GM12878 (cell line): ENCODE measurements at regions of chr19 and their contacts with region 1.

Region 1: GRCh38 chr19:29966588-29967249 is 24.7 kb downstream of the URI1 start:
- DNase-seq: no peak
- ATAC-seq: peak; percentile 81
- H3K4me3 ChIP-seq: no peak overlapping the region
- H3K27ac ChIP-seq: peak overlapping the region; percentile 50; the same call in 1 of the 2 replicates
- H3K4me1 ChIP-seq: peaks cover 11% of the 10 kb centered on the region
- H3K27me3 ChIP-seq: no peaks in the 10 kb centered on the region
- CTCF ChIP-seq: peak in 2 of 3 experiments; percentile 22 to 24; a peak in 3 of 6 replicates
- EP300 ChIP-seq: no peak
- POLR2A ChIP-seq: no peak
- RAD21 ChIP-seq: peak; percentile 32

Region 2: DNA sequence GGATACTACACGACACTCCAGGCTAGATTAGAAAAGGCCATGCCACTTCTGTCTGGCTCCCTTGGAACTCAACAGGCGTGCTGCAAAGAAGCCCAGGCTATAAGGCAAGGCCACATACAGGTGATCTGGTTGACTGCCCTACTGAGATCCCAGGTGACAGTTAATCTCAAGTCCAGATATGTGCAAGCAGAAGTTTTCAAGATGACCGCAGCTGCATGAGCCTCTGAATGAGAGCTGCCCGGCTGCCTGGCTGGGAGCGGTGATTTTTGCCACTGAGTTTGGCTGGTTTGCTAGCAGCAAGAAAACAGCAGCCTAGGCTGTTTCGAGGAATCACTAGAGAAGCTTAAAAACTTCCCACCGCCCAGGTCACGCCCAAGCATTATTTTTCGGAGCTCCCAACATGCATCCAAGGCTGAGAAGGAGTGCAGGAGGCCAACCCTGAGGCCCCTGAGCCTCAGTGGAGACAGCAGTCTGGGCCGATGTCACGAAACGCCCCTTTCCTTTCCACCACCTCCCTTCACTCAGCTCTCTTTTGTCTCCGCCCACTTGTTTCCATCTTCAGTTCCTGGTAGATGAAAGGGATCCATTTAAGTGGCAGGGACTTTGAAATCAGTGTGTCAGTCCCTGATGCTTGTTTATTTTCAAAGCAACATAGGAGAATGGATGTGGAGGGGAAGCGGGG is 38.6 kb before region 1 on chr19:
- CTCF ChIA-PET with region 1: interaction called, 10 read pairs
- POLR2A ChIA-PET with region 1: no interaction called
- RAD21 ChIA-PET with region 1: no interaction called
- SMC1A ChIA-PET with region 1: interaction called, 9 read pairs
- in situ Hi-C with region 1: no loop called
- intact Hi-C with region 1: no loop called
- DNase-seq: peak; percentile 46
- ATAC-seq: peak; percentile 90
- H3K4me3 ChIP-seq: peak overlapping the region; percentile 41; the same call in 1 of the 2 replicates
- H3K27ac ChIP-seq: peak overlapping the region; percentile 63
- H3K4me1 ChIP-seq: peaks cover 12% of the 10 kb centered on the region
- H3K27me3 ChIP-seq: no peaks in the 10 kb centered on the region
- CTCF ChIP-seq: no peak
- EP300 ChIP-seq: no peak; a peak in 1 of 4 replicates
- POLR2A ChIP-seq: no peak
- RAD21 ChIP-seq: no peak

Region 3: DNA sequence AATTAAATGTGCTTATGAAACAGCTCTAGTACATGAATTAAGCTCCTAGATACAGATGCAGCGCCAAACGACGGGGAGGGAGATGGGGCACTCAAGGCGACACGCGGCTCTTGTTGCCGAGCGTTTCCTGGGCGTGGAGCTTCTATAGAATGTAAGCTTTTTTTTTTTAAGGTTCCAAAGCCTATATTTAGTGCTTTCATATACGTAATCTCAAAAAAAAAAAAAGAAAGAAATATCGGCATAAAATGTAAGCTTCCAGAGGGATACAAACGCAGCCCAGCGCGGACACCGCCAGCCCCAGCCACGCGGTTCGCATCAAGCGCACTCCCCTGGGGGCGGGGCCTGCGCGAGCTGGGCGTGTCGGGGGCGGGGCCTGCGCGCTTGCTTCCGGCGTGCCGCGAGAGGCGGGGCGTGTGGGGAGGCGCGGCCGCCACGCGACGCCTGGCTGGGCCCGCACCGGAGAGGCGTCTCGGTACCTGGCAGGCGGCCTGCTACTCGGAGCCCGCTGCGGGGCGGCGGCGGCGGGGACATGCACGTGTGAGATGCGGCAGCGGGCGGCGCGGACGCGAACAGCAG is 24.8 kb before region 1 on chr19 and contains the start of gene URI1:
- CTCF ChIA-PET with region 1: interaction called, 35 read pairs
- POLR2A ChIA-PET with region 1: interaction called, 5 read pairs
- RAD21 ChIA-PET with region 1: interaction called, 12 read pairs
- SMC1A ChIA-PET with region 1: interaction called, 23 read pairs
- in situ Hi-C with region 1: no loop called
- intact Hi-C with region 1: no loop called
- DNase-seq: no peak
- ATAC-seq: peak; percentile 85
- H3K4me3 ChIP-seq: peak within 1 kb of the TSS; percentile 97
- H3K27ac ChIP-seq: peak within 1 kb of the TSS; percentile 84
- H3K4me1 ChIP-seq: peaks cover 3% of the 10 kb centered on the region; the same call in 1 of the 2 replicates
- H3K27me3 ChIP-seq: no peaks in the 10 kb centered on the region
- CTCF ChIP-seq: no peak
- EP300 ChIP-seq: no peak
- POLR2A ChIP-seq: peak; percentile 78
- RAD21 ChIP-seq: no peak
- polyA plus RNA-seq, gene URI1: 19.6 to 30.4 TPM

Region 4: GRCh38 chr19:29978080-29978479 is 11.4 kb after region 1 on chr19:
- CTCF ChIA-PET with region 1: interaction called, 18 read pairs
- POLR2A ChIA-PET with region 1: interaction called, 3 read pairs
- RAD21 ChIA-PET with region 1: interaction called, 4 read pairs
- SMC1A ChIA-PET with region 1: interaction called, 13 read pairs
- in situ Hi-C with region 1: no loop called
- intact Hi-C with region 1: no loop called
- DNase-seq: no peak
- ATAC-seq: peak; percentile 69
- H3K4me3 ChIP-seq: 0 out of 2 replicates have a peak overlapping the region, but pooled peaks have one; percentile 3
- H3K27ac ChIP-seq: peak overlapping the region; percentile 42
- H3K4me1 ChIP-seq: no peaks in the 10 kb centered on the region
- H3K27me3 ChIP-seq: no peaks in the 10 kb centered on the region
- CTCF ChIP-seq: no peak
- EP300 ChIP-seq: no peak
- POLR2A ChIP-seq: no peak
- RAD21 ChIP-seq: no peak

Region 5: DNA sequence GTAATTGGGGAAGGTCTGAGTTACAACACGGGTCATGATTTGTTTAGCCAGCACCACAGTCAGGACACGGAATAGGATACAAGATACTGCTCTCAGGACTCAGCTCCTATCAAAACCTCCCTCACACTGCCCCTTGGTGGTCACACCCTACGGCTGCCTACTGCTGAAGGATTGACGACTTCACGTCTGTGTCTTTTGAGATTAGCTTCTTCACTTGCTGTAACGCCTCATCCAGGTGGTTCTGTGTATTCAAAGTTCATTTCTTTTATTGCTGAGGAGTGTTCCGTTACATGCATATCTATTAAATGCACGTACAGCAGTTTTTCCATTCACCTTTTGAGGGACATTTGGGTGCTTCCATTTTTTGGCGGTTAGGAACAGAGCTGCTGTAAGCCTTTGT is 21.6 kb after region 1 on chr19:
- CTCF ChIA-PET with region 1: interaction called, 5 read pairs
- POLR2A ChIA-PET with region 1: interaction called, 4 read pairs
- RAD21 ChIA-PET with region 1: interaction called, 3 read pairs
- SMC1A ChIA-PET with region 1: interaction called, 11 read pairs
- in situ Hi-C with region 1: no loop called
- intact Hi-C with region 1: no loop called
- DNase-seq: no peak
- ATAC-seq: no peak
- H3K4me3 ChIP-seq: no peak overlapping the region
- H3K27ac ChIP-seq: no peak overlapping the region
- H3K4me1 ChIP-seq: no peaks in the 10 kb centered on the region
- H3K27me3 ChIP-seq: no peaks in the 10 kb centered on the region
- CTCF ChIP-seq: no peak
- EP300 ChIP-seq: no peak
- POLR2A ChIP-seq: no peak
- RAD21 ChIP-seq: no peak